ENCODE measurements at regions of chr20 and their contacts with region 1.

Region 1: DNA sequence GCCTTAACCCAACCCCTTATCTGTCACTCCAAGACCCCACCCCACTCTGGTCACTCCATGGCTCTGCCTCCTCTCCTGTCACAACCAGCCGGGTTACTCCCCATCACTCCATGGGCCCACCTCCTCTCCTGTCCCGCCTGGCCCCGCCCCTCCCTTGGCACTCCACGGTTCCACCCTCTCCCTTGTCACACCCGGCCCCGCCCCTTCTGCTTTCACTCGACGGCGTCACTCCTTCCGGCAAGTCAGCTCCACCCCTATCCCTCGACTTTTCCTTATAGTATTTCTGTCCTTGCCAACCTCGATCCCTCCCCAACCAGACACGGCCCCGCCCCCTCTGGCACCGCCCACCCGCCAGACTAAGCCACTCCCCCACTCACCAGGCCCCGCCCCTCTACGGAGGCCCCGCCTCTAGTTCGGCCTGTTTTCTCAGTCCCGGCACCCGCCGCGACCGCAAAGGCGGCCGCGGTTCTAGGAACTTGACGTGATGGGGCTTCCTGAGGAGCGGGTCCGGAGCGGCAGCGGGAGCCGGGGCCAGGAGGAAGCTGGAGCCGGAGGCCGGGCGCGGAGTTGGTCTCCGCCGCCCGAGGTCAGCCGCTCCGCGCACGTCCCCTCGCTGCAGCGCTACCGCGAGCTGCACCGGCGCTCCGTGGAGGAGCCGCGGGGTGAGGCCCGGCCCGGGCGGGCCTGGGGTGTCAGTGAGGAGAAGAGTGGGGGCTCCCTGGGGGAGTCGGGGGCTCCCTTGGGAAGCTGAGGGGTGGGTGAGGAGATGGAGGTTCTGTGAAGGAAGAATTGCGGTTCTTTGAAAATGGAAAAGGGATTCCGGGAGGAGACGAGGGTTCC is at the start of gene ACSS2:
- DNase-seq: peak; percentile 85 to 98
- ATAC-seq: peak; percentile 75 to 90
- H3K4me3 ChIP-seq: peak within 1 kb of the TSS; percentile 81
- H3K27ac ChIP-seq: peak within 1 kb of the TSS; percentile 75 to 87
- H3K4me1 ChIP-seq: peaks cover 26% of the 10 kb centered on the region
- CTCF ChIP-seq: no peak
- EP300 ChIP-seq: no peak
- POLR2A ChIP-seq: peak; percentile 64
- RAD21 ChIP-seq: peak in 1 of 2 experiments; percentile 30; a peak in 1 of 5 replicates
- polyA plus RNA-seq, gene ACSS2: 21.4 and 22.1 TPM in 2 replicates

Region 2: DNA sequence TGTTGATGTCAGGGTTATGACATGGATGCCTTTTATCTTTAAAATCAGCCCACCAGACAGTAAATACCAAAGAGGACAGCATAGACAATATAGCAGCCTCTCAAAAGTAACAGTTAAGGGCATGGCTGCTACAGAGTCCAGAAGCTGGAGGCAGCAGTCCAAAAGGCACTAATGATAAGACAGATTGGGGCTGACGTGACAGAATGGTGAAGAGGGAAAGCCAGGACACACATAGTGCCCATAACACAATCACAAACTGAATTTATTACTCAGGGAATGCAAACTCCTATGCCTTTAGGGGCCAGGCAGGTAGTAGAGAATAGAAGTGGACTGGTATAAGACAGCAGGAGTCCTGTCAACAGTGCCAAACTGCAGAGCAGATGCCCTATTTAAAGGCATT is 131.5 kb before region 1 on chr20:
- CTCF ChIA-PET with region 1: no interaction called
- POLR2A ChIA-PET with region 1: no interaction called
- DNase-seq: no peak
- ATAC-seq: no peak
- H3K4me3 ChIP-seq: no peak overlapping the region
- H3K27ac ChIP-seq: no peak overlapping the region
- H3K4me1 ChIP-seq: no peaks in the 10 kb centered on the region
- CTCF ChIP-seq: no peak
- EP300 ChIP-seq: no peak
- POLR2A ChIP-seq: no peak
- RAD21 ChIP-seq: no peak

Region 3: DNA sequence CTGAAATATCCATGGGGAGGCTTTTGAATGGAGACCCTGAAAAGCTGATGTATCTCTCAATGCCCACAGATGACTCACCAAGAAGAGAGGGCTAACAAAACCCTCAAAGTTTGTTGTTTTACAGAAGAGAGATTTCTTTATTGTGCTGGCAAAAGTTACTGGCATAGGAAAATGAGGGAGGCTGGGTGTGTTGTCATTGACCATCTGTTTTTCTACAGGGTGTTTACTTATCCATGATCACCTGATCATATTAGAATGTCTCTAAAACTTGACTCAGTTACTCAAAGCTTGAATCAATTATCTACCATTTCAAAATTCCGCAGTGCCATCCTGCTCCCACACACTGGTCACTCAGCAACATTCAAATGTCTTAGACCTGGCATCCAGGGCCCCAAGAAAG is 60.7 kb before region 1 on chr20:
- CTCF ChIA-PET with region 1: no interaction called
- POLR2A ChIA-PET with region 1: no interaction called
- DNase-seq: no peak
- ATAC-seq: no peak
- H3K4me3 ChIP-seq: no peak overlapping the region
- H3K27ac ChIP-seq: no peak overlapping the region
- H3K4me1 ChIP-seq: peaks cover 3% of the 10 kb centered on the region; the same call in 1 of the 3 replicates
- CTCF ChIP-seq: no peak
- EP300 ChIP-seq: no peak
- POLR2A ChIP-seq: no peak
- RAD21 ChIP-seq: no peak

Region 4: GRCh38 chr20:34888468-34888867 is 12.1 kb after region 1 on chr20:
- CTCF ChIA-PET with region 1: interaction called, 17 read pairs
- POLR2A ChIA-PET with region 1: interaction called, 6 read pairs
- DNase-seq: no peak
- ATAC-seq: no peak
- H3K4me3 ChIP-seq: no peak overlapping the region
- H3K27ac ChIP-seq: no peak overlapping the region
- H3K4me1 ChIP-seq: peaks cover 18% of the 10 kb centered on the region
- CTCF ChIP-seq: no peak
- EP300 ChIP-seq: no peak
- POLR2A ChIP-seq: no peak
- RAD21 ChIP-seq: no peak

Region 5: DNA sequence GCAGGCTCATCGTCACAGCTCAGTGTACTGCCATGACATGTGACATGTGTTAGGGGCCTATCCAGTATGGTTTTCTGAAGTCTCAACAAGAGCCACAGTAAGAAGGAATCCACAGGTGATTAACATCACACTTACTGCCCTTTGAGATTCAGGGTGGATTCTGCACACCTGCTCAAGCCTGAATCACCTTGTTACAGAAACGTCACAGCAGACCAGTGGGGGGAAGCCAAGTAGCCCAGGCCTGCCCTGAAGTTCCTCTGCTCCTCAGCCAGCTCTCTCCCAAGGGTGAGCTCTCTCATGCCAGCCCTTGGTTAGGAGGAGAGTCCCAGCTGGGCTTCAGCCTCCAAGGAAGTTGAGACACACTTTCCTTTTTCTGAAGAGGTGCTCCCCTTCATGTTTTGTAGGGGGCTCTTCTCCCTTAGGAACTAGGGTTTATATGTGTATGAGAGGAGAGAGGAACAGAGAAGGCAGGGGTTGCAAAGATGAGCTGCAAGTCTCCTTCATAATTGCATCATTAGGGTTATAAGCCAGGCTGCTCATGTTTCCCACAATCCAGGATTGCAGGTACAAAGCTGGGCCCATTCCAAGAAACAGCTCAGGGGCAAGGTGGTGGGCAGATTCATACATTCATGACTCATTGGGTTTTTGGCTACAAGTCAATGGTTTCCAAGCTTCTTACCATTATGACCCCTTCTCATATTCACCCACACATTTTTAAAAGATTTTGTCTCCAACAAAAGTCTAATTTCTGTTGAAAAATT is 67.6 kb after region 1 on chr20:
- CTCF ChIA-PET with region 1: interaction called, 207 read pairs
- POLR2A ChIA-PET with region 1: interaction called, 3 read pairs
- DNase-seq: no peak
- ATAC-seq: no peak
- H3K4me3 ChIP-seq: no peak overlapping the region
- H3K27ac ChIP-seq: peak overlapping the region; percentile 57 to 75; a peak in 5 of 6 replicates
- H3K4me1 ChIP-seq: peaks cover 10% of the 10 kb centered on the region; the same call in 2 of the 3 replicates
- CTCF ChIP-seq: no peak
- EP300 ChIP-seq: no peak
- POLR2A ChIP-seq: no peak
- RAD21 ChIP-seq: no peak

Region 6: DNA sequence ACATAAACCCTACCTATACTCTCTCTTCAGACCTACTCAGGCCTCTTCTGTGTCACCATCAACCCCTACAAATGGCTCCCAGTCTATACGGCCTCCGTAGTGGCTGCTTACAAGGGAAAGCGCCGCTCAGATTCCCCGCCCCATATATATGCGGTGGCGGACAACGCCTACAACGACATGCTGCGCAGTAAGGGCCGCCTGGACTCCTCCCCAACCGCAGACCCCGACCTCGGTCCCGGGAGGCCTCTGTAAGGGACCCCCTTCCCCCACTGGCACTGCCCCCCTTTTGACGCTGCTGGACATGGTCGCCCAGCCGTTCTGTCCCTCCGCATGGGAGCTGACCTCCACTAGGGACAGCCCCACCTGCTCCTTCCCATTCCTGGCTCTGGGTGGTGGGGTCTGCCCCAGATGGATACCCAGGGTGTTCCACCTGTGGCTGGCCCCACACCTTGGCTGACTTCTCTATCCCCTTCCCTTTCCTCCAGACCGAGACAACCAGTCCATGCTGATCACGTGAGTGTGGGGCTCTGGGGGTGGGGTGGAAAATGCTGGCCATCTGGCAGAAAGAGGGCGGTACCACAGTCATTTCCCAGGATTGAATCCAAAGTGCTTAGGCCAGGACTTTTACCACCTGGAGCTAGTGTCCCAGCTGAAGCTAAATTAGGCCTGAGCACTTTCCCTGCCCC is 104.3 kb after region 1 on chr20:
- CTCF ChIA-PET with region 1: interaction called, 10 read pairs
- POLR2A ChIA-PET with region 1: no interaction called
- DNase-seq: no peak
- ATAC-seq: no peak
- H3K4me3 ChIP-seq: no peak overlapping the region
- H3K27ac ChIP-seq: no peak overlapping the region
- H3K4me1 ChIP-seq: 0 out of 3 replicates have a peak, but pooled peaks cover 6% of the 10 kb centered on the region
- CTCF ChIP-seq: no peak
- EP300 ChIP-seq: no peak
- POLR2A ChIP-seq: no peak
- RAD21 ChIP-seq: no peak

Region 7: DNA sequence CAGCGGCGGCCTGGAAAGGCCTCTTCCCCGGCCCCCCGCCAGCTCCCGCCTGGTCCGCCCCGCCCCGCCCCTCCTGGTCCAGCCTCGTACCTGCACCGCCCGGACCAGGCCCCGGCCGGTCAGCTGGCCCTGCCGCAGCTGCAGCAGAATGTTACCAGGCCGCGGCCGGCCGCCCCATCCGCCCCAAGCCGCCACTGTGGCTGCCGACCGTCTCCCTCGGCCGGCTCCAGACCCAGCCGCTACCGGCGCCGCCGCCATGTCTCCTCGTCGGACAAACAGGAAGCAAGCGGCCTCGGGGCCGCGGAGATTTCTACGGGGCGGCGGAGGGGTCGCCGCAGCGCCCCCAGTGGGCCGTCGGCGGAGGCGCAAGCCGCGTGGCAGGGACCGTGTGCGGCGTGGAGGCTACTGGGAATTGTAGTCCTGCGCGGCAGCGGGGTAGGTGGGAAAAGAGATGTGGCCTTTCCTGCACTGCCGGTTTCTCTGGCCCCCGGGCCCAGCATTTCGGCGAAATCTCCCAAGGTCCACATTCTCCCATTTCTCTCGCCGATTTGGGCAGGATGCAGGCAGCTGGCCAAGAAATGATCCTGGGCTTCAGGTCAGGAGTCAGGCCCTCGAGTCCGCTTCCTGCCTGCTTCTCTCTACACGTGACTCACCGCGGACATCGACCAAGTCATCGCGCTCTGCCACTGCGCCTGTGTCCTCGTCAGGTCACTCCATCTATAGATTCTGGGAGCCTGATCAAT is 216.3 kb after region 1 on chr20 and contains the start of gene TRPC4AP:
- CTCF ChIA-PET with region 1: interaction called, 17 read pairs
- POLR2A ChIA-PET with region 1: interaction called, 4 read pairs
- DNase-seq: peak; percentile 69 to 91
- ATAC-seq: peak; percentile 94 to 95
- H3K4me3 ChIP-seq: peak within 1 kb of the TSS; percentile 61
- H3K27ac ChIP-seq: peak within 1 kb of the TSS; percentile 93 to 94
- H3K4me1 ChIP-seq: peaks cover 27% of the 10 kb centered on the region
- CTCF ChIP-seq: peak; percentile 89
- EP300 ChIP-seq: no peak
- POLR2A ChIP-seq: peak; percentile 61
- RAD21 ChIP-seq: peak; percentile 47 to 52
- polyA plus RNA-seq, gene TRPC4AP: 55.3 and 64.6 TPM in 2 replicates

Measured in A549 (cell line).